Ascending aorta (tissue), 2 donors: ENCODE measurements at regions of chr6 and their contacts with region 1.

Region 1: GRCh38 chr6:84685983-84686584 is 78.3 kb downstream of the TBX18 start:
- DNase-seq: no peak
- H3K4me3 ChIP-seq: no peak overlapping the region
- H3K27ac ChIP-seq: peak overlapping the region; percentile 84 to 86
- H3K4me1 ChIP-seq: peaks cover 0 to 29% of the 10 kb centered on the region in 2 donors
- H3K27me3 ChIP-seq: no peaks in the 10 kb centered on the region
- CTCF ChIP-seq: peak; percentile 27 to 47 (median 46)

Region 2: GRCh38 chr6:84575264-84575663 is 110.8 kb before region 1 on chr6:
- intact Hi-C with region 1: no loop called
- DNase-seq: no peak
- H3K4me3 ChIP-seq: no peak overlapping the region
- H3K27ac ChIP-seq: no peak overlapping the region
- H3K4me1 ChIP-seq: no peaks in the 10 kb centered on the region
- H3K27me3 ChIP-seq: no peaks in the 10 kb centered on the region
- CTCF ChIP-seq: no peak

Region 3: DNA sequence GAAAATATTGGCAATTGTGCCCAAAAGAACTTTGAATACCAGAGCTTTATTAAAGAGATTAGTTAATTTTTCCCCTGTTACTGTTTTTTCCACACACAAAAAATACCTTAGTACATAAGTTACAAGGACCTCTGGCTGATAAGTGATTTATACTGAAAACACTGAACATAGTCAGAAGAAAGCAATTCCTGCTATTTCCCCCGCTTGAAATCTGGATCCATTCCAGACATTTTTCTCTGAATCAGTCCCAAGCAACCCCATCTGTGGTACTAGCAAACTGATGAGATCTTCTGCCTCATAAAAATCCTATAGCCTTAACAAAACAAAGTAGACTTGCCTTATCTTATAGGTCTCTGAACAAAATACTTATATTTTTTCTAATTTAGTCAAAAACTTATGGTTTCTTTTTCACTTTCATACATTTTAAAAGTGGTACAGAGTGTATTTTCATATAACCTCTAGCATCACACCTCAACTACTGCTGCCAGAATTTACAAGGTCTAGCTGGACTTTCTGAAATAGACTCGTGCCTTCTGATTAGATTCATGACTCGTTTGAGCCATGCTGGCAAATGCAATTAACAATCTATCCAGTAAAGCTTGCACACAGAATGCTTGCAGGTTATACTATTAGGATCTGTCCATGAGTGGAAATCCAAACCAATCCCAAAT is 33.6 kb before region 1 on chr6:
- intact Hi-C with region 1: loop called (anchors 5 kb)
- DNase-seq: no peak
- H3K4me3 ChIP-seq: no peak overlapping the region
- H3K27ac ChIP-seq: peak overlapping the region; percentile 35 to 54
- H3K4me1 ChIP-seq: peaks cover 9 to 24% of the 10 kb centered on the region in 2 donors
- H3K27me3 ChIP-seq: no peaks in the 10 kb centered on the region
- CTCF ChIP-seq: no peak

Region 4: GRCh38 chr6:84707171-84707570 is 21.1 kb after region 1 on chr6:
- intact Hi-C with region 1: loop called (anchors 2 kb)
- DNase-seq: no peak
- H3K4me3 ChIP-seq: no peak overlapping the region
- H3K27ac ChIP-seq: peak overlapping the region; percentile 14 to 34
- H3K4me1 ChIP-seq: peaks cover 3 to 18% of the 10 kb centered on the region in 2 donors
- H3K27me3 ChIP-seq: no peaks in the 10 kb centered on the region
- CTCF ChIP-seq: no peak

Region 5: GRCh38 chr6:84764332-84765049 is 78.4 kb after region 1 on chr6 and contains the start of gene TBX18:
- intact Hi-C with region 1: loop called (anchors 5 kb)
- DNase-seq: peak; percentile 94 to 99
- H3K4me3 ChIP-seq: peak within 1 kb of the TSS; percentile 56 to 100
- H3K27ac ChIP-seq: peak within 1 kb of the TSS; percentile 98 to 100
- H3K4me1 ChIP-seq: no peaks in the 10 kb centered on the region
- H3K27me3 ChIP-seq: no peaks in the 10 kb centered on the region
- CTCF ChIP-seq: no peak
- total RNA-seq, gene TBX18: 81.0 TPM

Region 6: DNA sequence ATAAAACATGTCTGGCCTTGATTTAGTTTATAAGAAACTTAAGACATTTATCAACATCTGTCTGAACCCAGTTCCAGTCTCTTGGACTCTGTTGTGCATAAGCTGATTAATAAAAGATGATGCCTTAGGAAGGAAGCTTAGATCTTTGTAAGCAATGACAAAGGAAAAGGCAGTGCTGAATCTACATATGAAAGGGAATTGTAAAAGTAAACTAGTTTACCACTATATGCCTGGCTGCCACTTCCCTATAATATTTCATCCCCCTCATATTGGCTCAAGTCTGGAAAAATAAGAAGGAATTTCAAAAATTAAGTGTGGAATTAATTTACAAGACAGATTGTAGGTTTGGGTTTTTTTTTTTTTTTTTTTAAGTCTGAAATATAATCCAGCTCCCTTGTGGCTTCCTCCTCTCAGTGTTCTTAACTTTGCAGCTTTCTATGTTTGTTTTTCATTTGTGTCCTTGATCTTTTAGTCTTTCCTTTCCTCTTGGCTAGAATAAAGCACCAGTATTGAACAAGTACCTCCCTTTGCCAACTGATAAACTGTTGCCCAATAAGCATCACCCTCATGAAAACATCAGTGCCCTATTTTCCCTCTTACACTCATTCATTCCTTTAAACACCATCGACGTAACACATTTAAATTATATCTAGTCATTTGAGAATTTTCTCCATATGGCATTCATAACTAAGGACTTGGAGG is 225.0 kb after region 1 on chr6:
- intact Hi-C with region 1: no loop called
- DNase-seq: no peak
- H3K4me3 ChIP-seq: no peak overlapping the region
- H3K27ac ChIP-seq: no peak overlapping the region
- H3K4me1 ChIP-seq: no peaks in the 10 kb centered on the region
- H3K27me3 ChIP-seq: no peaks in the 10 kb centered on the region
- CTCF ChIP-seq: no peak